Activated CD4-positive, alpha-beta memory T cell treated with anti-CD3 and anti-CD28 coated beads for 36 hours (primary cell): ENCODE measurements at regions of chr20 and their contacts with region 1.

Region 1: GRCh38 chr20:34891166-34892062 is 15.0 kb downstream of the ACSS2 start:
- DNase-seq: peak; percentile 60
- H3K4me3 Mint-ChIP-seq: peak overlapping the region; percentile 10
- H3K27ac Mint-ChIP-seq: peak overlapping the region; percentile 80
- H3K4me1 Mint-ChIP-seq: peaks cover 40% of the 10 kb centered on the region
- H3K27me3 Mint-ChIP-seq: no peaks in the 10 kb centered on the region

Region 2: GRCh38 chr20:34863421-34863965 is 27.9 kb before region 1 on chr20:
- CTCF ChIA-PET with region 1: no interaction called
- POLR2A ChIA-PET with region 1: no interaction called
- intact Hi-C with region 1: no loop called
- DNase-seq: no peak
- H3K4me3 Mint-ChIP-seq: no peak overlapping the region
- H3K27ac Mint-ChIP-seq: no peak overlapping the region
- H3K4me1 Mint-ChIP-seq: peaks cover 2% of the 10 kb centered on the region
- H3K27me3 Mint-ChIP-seq: no peaks in the 10 kb centered on the region

Region 3: GRCh38 chr20:34922654-34923424 is 31.4 kb after region 1 on chr20:
- CTCF ChIA-PET with region 1: no interaction called
- POLR2A ChIA-PET with region 1: interaction called, 6 read pairs
- intact Hi-C with region 1: loop called (anchors 1 kb)
- DNase-seq: no peak
- H3K4me3 Mint-ChIP-seq: no peak overlapping the region
- H3K27ac Mint-ChIP-seq: no peak overlapping the region
- H3K4me1 Mint-ChIP-seq: peaks cover 35% of the 10 kb centered on the region
- H3K27me3 Mint-ChIP-seq: no peaks in the 10 kb centered on the region

Region 4: DNA sequence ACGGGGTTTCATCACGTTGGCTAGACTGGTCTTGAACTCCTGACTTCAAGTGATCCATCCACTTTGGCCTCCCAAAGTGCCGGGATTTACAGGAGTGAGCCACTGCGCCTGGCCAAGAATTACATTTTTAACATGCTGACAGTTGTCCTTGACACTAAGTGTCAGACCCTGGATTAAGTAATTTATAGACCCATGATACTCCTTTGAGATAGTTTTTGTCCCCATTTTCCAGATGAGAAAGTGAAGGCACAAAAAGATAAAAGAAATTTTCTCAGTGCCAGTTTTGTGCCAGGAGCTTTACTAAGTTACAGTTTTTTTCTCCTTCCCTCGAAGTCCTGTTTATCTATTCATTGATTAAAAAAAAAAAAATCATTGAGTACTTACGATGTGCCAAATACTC is 265.6 kb after region 1 on chr20:
- CTCF ChIA-PET with region 1: no interaction called
- POLR2A ChIA-PET with region 1: no interaction called
- intact Hi-C with region 1: no loop called
- DNase-seq: no peak
- H3K4me3 Mint-ChIP-seq: no peak overlapping the region
- H3K27ac Mint-ChIP-seq: no peak overlapping the region
- H3K4me1 Mint-ChIP-seq: peaks cover 2% of the 10 kb centered on the region
- H3K27me3 Mint-ChIP-seq: no peaks in the 10 kb centered on the region